Breast epithelium (tissue), 4 donors: ENCODE measurements at regions of chr3 and their contacts with region 1.

Region 1: GRCh38 chr3:38510631-38511030 is 14.5 kb downstream of the EXOG start:
- DNase-seq: no peak
- H3K4me3 ChIP-seq: no peak overlapping the region
- H3K27ac ChIP-seq: no peak overlapping the region
- H3K4me1 ChIP-seq: no peaks in the 10 kb centered on the region
- H3K27me3 ChIP-seq: no peaks in the 10 kb centered on the region
- CTCF ChIP-seq: no peak
- POLR2A ChIP-seq: no peak

Region 2: GRCh38 chr3:38493031-38493430 is 17.6 kb before region 1 on chr3:
- intact Hi-C with region 1: loop called (anchors 2 kb)
- DNase-seq: no peak
- H3K4me3 ChIP-seq: no peak overlapping the region
- H3K27ac ChIP-seq: no peak overlapping the region
- H3K4me1 ChIP-seq: no peaks in the 10 kb centered on the region
- H3K27me3 ChIP-seq: no peaks in the 10 kb centered on the region
- CTCF ChIP-seq: no peak
- POLR2A ChIP-seq: no peak